Right ventricle myocardium inferior (tissue), 1 donor: ENCODE measurements at regions of chrX and their contacts with region 1.

Region 1: DNA sequence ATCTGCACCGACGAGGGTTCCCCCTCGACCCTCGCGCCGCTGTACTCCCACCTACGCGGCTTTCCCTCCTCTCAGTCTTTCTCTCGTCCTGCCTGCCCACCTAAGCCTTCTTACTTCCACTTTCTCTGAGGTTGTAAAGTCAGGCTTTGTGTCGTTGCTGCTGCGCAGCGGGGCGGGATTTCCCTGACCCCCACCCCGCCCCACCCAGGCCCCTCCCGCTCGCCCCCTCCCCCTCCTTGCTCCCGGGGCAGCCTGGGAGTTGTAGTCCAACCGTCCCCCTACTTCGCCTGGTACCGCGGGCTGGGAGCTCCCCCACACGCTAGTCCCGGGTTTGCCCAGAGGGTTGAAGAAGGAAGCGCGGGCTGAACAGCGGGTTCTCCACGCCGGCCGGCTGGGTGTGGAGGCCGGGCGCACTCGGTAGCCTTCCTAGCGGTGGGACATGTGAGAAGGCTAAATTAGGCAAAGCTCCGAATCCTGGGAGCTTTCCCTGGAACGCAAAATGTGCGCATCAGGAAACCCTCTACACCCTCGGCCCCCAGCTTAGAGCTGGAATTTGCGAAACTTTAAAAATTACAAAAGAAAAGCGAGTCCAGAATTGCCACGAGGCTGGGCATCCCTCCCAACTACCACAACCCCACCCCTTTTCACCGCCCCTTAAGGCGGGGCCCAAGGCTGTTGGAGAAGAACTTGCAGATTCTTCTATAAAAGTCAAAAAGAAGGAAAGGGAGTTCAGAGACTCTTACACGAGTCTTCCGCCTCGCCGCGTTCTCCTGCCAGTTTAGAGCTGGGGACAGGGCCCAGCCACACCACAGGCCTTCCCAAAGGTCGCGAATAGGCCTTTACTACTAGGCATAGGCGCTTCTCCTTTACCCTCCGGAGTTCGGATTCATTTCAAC is at the start of gene ATP11C:
- DNase-seq: peak; percentile 88
- ATAC-seq: peak; percentile 96
- total RNA-seq, gene ATP11C: 6.0 TPM

Region 2: DNA sequence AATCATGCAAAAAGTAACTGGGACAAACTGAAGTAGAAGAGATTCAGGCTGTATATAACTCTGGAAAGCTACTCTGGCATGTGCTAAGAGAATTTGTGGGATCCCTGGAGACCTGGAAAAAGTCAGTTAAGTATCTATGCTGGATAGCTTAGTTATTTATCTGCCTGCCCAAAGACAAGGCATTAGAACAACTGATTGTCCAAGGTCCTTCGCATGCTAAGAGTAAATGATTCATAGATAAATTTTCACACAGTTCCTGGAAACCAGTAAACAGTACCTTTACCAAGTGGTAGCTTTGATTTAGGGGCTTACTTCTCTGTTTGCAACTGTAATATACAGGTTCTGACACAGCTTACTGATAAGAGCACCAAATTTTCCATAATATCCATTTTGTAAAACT is 105.1 kb before region 1 on chrX:
- intact Hi-C with region 1: loop called (anchors 2 kb)
- DNase-seq: no peak
- ATAC-seq: no peak